ENCODE measurements at regions of chr1 and their contacts with region 1.

Region 1: GRCh38 chr1:192808518-192809306 is at the start of gene RGS2:
- DNase-seq: peak; percentile 92
- ATAC-seq: peak; percentile 93
- H3K4me3 Mint-ChIP-seq: peak within 1 kb of the TSS; percentile 87
- H3K27ac Mint-ChIP-seq: peak within 1 kb of the TSS; percentile 92
- H3K4me1 Mint-ChIP-seq: peaks cover 29% of the 10 kb centered on the region
- H3K27me3 Mint-ChIP-seq: no peaks in the 10 kb centered on the region
- total RNA-seq, gene RGS2: 5.1 to 5.3 TPM

Region 2: DNA sequence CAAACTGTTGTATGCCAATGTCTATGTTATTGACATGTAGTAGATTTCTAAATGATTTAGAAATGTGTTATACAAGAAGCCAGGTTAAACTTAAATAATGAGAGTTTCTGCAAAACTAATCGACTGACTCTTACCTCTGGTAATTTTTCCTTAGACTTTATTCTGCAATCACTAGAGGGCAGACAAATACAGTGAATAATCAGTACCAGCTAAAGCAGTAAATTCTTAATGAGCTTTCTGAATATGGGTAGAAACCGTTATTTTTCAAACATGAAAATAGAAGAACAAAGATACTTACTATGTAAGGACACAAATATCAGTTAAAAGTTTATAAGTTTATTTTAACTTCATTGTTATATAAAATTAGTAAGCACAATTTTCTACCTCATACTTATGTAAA is 331.1 kb before region 1 on chr1:
- CTCF ChIA-PET with region 1: interaction called, 13 read pairs
- POLR2A ChIA-PET with region 1: no interaction called
- intact Hi-C with region 1: loop called (anchors 2 to 5 kb)
- DNase-seq: no peak
- ATAC-seq: peak; percentile 67
- H3K4me3 Mint-ChIP-seq: no peak overlapping the region
- H3K27ac Mint-ChIP-seq: no peak overlapping the region
- H3K4me1 Mint-ChIP-seq: peaks cover 2% of the 10 kb centered on the region
- H3K27me3 Mint-ChIP-seq: no peaks in the 10 kb centered on the region

Region 3: GRCh38 chr1:192639607-192640368 is 168.9 kb before region 1 on chr1:
- CTCF ChIA-PET with region 1: interaction called, 3 read pairs
- POLR2A ChIA-PET with region 1: no interaction called
- intact Hi-C with region 1: loop called in 1 of 2 experiments (anchors 2 kb)
- DNase-seq: no peak
- ATAC-seq: peak; percentile 92
- H3K4me3 Mint-ChIP-seq: no peak overlapping the region
- H3K27ac Mint-ChIP-seq: peak overlapping the region; percentile 71
- H3K4me1 Mint-ChIP-seq: peaks cover 20% of the 10 kb centered on the region
- H3K27me3 Mint-ChIP-seq: peaks cover 3% of the 10 kb centered on the region

Region 4: GRCh38 chr1:193014400-193014799 is 205.7 kb after region 1 on chr1:
- CTCF ChIA-PET with region 1: interaction called, 46 read pairs
- POLR2A ChIA-PET with region 1: no interaction called
- intact Hi-C with region 1: loop called (anchors 1 kb)
- DNase-seq: no peak
- ATAC-seq: no peak
- H3K4me3 Mint-ChIP-seq: no peak overlapping the region
- H3K27ac Mint-ChIP-seq: no peak overlapping the region
- H3K4me1 Mint-ChIP-seq: no peaks in the 10 kb centered on the region
- H3K27me3 Mint-ChIP-seq: no peaks in the 10 kb centered on the region

Region 5: GRCh38 chr1:193104906-193105820 is 296.5 kb after region 1 on chr1 and contains the start of gene GLRX2:
- CTCF ChIA-PET with region 1: no interaction called
- POLR2A ChIA-PET with region 1: no interaction called
- intact Hi-C with region 1: loop called (anchors 1 to 5 kb)
- DNase-seq: peak; percentile 75
- ATAC-seq: peak; percentile 91
- H3K4me3 Mint-ChIP-seq: peak within 1 kb of the TSS; percentile 88
- H3K27ac Mint-ChIP-seq: peak within 1 kb of the TSS; percentile 78
- H3K4me1 Mint-ChIP-seq: peaks cover 14% of the 10 kb centered on the region
- H3K27me3 Mint-ChIP-seq: no peaks in the 10 kb centered on the region
- total RNA-seq, gene GLRX2: 29.8 to 30.2 TPM

Region 6: GRCh38 chr1:193190096-193190744 is 381.5 kb after region 1 on chr1:
- CTCF ChIA-PET with region 1: no interaction called
- POLR2A ChIA-PET with region 1: no interaction called
- intact Hi-C with region 1: no loop called
- DNase-seq: no peak
- ATAC-seq: no peak
- H3K4me3 Mint-ChIP-seq: no peak overlapping the region
- H3K27ac Mint-ChIP-seq: no peak overlapping the region
- H3K4me1 Mint-ChIP-seq: peaks cover 43% of the 10 kb centered on the region
- H3K27me3 Mint-ChIP-seq: no peaks in the 10 kb centered on the region

Region 7: DNA sequence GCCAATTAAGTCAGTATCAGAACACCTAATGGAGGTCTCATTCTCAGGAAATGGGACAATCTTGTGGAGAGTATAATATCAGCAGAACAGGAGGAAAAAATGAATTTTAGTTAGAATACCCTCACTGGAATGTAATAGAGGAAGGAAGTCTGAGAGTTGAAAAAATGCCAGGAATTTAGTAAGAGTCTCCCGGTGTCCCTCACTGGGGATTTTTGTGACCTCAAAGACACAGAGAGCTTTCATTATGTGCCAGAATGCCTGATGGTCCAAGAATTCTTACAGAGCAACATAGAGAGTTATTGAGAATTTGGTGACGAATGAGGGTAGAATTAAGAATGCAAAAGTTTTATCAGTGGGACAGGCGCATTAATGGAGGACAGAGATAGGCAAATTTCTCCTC is 821.2 kb after region 1 on chr1:
- CTCF ChIA-PET with region 1: no interaction called
- POLR2A ChIA-PET with region 1: no interaction called
- intact Hi-C with region 1: no loop called
- DNase-seq: no peak
- ATAC-seq: no peak
- H3K4me3 Mint-ChIP-seq: no peak overlapping the region
- H3K27ac Mint-ChIP-seq: no peak overlapping the region
- H3K4me1 Mint-ChIP-seq: peaks cover 9% of the 10 kb centered on the region
- H3K27me3 Mint-ChIP-seq: no peaks in the 10 kb centered on the region

Region 8: GRCh38 chr1:194295685-194296084 is 1487.0 kb after region 1 on chr1:
- CTCF ChIA-PET with region 1: no interaction called
- POLR2A ChIA-PET with region 1: no interaction called
- intact Hi-C with region 1: loop called (anchors 5 kb)
- DNase-seq: peak; percentile 27
- ATAC-seq: peak; percentile 76
- H3K4me3 Mint-ChIP-seq: no peak overlapping the region
- H3K27ac Mint-ChIP-seq: peak overlapping the region; percentile 53
- H3K4me1 Mint-ChIP-seq: peaks cover 44% of the 10 kb centered on the region
- H3K27me3 Mint-ChIP-seq: no peaks in the 10 kb centered on the region

Measured in activated CD4-positive, alpha-beta T cell treated with anti-CD3 and anti-CD28 coated beads for 36 hours (primary cell).